ENCODE measurements at regions of chr16 and their contacts with region 1.

Region 1: DNA sequence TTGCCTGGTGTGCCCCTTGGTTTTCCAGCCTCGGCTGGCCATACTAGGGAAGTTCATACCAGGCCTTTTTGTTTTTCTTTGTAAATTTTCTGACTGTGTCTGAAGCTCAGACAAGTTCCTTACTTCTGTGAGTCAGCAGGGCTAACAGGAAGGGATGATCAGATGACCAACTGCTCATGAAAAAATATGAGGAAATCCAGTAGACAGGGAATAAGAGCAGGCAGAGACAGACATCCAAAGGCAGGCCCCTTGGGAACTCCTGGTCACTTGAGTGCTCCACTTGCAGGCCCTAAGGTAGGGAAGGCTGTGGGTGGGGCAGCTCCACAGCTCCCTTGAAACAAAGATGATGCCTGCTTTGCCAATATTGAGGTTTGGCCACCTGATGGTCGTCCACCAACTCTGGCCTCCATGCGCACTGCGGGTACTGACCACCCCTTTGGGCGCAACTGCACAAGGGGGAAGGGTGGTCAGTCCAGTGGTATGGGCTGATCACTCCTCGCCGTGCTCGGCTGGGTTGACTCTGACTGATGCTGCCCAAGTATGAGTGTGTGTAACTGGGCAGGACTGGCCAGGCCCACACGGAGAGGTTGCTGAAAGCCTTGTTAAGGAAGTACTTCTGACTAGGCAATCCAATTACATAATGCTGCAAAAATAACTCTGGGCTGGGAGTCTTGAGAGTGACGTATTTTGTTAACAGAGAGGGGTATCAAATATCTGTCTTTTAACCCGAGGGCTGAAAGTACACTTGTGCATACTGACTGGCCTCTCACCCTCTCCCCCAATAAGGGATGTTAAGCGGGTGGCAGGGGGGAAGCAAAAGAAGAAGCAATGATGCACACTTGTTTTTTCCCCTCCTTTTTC is 20.8 kb upstream of the ZFHX3 start:
- DNase-seq: peak; percentile 94 to 96
- H3K4me3 ChIP-seq: peak overlapping the region; percentile 1 to 19
- H3K27ac ChIP-seq: peak overlapping the region; percentile 99
- H3K4me1 ChIP-seq: peaks cover 6 to 93% (median 64%) of the 10 kb centered on the region in 4 donors
- H3K27me3 ChIP-seq: no peaks in the 10 kb centered on the region
- CTCF ChIP-seq: peak in 1 of 2 experiments; percentile 33

Region 2: DNA sequence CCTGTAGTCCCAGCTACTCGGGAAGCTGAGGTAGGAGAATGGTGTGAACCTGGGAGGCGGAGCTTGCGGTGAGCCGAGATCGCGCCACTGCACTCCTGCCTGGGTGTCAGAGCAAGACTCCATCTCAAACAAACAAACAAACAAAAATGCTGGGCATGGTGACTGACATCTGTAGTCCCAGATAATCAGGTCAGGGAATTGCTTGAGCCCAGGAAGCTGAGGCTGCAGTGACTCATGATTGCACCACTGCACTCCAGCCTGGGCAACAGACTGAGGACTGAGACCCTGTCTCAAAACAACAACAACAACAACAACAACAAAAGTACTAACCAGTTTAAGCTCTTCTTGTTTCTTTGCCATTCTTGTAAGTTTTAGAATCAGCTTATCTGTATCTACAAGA is 513.8 kb before region 1 on chr16:
- intact Hi-C with region 1: no loop called
- DNase-seq: no peak
- H3K4me3 ChIP-seq: no peak overlapping the region
- H3K27ac ChIP-seq: no peak overlapping the region
- H3K4me1 ChIP-seq: no peaks in the 10 kb centered on the region
- H3K27me3 ChIP-seq: no peaks in the 10 kb centered on the region
- CTCF ChIP-seq: no peak

Region 3: GRCh38 chr16:72787514-72788268 is 281.1 kb before region 1 on chr16:
- intact Hi-C with region 1: loop called (anchors 10 kb)
- DNase-seq: peak; percentile 87 to 92
- H3K4me3 ChIP-seq: peak overlapping the region; percentile 58 to 62
- H3K27ac ChIP-seq: peak overlapping the region; percentile 96 to 98
- H3K4me1 ChIP-seq: peaks cover 0 to 45% (median 21%) of the 10 kb centered on the region in 4 donors
- H3K27me3 ChIP-seq: no peaks in the 10 kb centered on the region
- CTCF ChIP-seq: peak in 1 of 2 experiments; percentile 19

Region 4: GRCh38 chr16:72847187-72848027 is 221.4 kb before region 1 on chr16:
- intact Hi-C with region 1: loop called (anchors 5 kb)
- DNase-seq: no peak
- H3K4me3 ChIP-seq: peak overlapping the region; percentile 38 to 46
- H3K27ac ChIP-seq: peak overlapping the region; percentile 96 to 99
- H3K4me1 ChIP-seq: peaks cover 0 to 96% (median 74%) of the 10 kb centered on the region in 4 donors
- H3K27me3 ChIP-seq: no peaks in the 10 kb centered on the region
- CTCF ChIP-seq: peak; percentile 37 to 54

Region 5: DNA sequence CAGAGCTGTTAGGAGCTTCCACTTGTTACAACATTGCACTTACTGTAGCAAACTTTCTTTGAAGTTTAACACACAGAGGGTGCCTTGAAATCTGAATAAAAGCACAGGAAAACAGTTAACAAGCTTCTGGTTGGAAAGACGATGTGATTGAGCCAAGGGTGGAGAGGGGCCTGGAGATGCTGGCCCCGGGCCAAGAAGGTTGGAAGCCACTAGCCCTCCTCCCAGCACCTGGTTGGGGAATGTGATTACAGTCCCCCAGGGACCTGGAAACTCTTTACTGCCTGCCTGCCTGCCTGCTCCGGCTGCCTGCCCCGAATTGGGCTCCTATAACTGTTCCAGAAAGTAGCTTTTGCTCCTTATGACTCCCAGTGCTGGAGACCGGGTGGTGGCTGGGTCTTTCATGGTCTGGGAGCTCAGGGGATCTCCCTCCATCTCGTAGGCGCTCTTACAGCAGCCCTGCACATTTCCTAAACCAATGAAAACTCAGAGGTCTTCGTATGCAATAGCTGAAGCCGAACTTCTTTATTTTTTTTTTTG is 27.2 kb after region 1 on chr16:
- intact Hi-C with region 1: loop called (anchors 2 kb)
- DNase-seq: no peak
- H3K4me3 ChIP-seq: peak overlapping the region; percentile 6 to 15
- H3K27ac ChIP-seq: peak overlapping the region; percentile 88 to 99
- H3K4me1 ChIP-seq: peaks cover 0 to 63% (median 38%) of the 10 kb centered on the region in 4 donors
- H3K27me3 ChIP-seq: no peaks in the 10 kb centered on the region
- CTCF ChIP-seq: no peak

Region 6: GRCh38 chr16:73154063-73154870 is 85.5 kb after region 1 on chr16:
- intact Hi-C with region 1: no loop called
- DNase-seq: peak; percentile 67 to 77
- H3K4me3 ChIP-seq: no peak overlapping the region
- H3K27ac ChIP-seq: no peak overlapping the region
- H3K4me1 ChIP-seq: peaks cover 0 to 12% (median 0%) of the 10 kb centered on the region in 4 donors
- H3K27me3 ChIP-seq: no peaks in the 10 kb centered on the region
- CTCF ChIP-seq: no peak

Measured in tibial artery (tissue), 4 donors.